ENCODE measurements at regions of chr11 and their contacts with region 1.

Region 1: DNA sequence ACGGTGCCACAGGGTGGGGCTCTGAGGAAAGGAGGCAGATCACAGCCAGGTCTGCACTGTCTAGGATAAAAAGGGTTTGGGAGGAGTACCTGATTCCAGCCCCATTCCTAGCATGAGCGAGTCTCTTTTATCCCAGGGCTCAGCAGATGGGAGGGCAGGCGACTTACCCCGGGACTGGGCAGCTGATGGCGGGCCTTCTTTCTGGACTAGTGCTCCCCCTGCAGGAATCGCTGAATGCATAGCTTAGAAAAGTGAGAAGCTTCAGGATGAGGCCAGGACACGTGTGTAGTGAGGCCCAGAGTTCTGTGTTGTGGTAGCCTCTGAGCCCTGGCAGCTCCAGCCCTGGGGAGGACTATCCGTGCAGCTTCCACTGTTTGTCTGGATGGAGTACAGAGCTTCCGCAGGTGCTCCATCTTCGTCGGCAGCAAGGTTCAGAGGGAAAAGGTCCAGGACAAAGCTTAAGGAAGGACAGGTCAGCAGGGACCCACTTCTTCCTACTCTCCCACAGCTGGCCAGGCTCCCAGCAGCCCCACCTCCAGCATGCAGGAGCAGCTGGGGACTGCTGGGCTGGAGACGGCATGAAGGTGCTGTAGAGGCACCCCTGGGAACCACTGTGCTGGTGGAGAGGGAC is 30.4 kb downstream of the COMMD9 start:
- DNase-seq: peak; percentile 75

Region 2: DNA sequence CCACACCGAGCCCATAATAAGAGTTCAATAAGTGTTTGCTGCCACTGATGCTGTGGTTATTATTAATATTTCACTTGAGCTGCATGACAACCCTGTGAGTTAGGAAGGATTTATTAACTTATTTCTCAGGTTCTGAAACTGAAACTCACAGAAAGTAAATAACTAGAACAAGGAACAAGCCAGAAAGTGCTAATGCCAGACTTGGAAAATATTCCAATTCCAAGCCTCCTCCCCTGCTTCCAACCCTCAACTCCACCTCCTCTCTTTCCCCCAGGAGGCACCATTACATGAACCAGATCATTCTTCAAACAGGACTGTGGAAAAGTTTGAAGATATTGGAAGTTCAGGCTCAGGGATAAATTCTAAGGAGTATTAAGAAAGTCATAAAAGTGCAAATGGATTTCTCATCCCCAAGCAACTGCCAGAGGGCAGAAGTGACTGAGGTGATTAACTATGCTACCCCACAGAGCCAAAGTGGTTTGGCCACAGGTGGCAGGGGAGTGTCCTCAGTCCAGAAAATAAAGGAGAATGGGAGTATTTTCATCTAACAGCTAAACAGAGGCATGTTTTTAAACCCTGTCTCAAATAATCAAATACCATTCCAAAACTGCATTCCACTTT is 643.8 kb before region 1 on chr11:
- in situ Hi-C with region 1: loop called (anchors 5 kb)
- DNase-seq: no peak

Region 3: GRCh38 chr11:36023922-36024321 is 234.9 kb before region 1 on chr11:
- in situ Hi-C with region 1: no loop called
- DNase-seq: no peak

Region 4: GRCh38 chr11:36142439-36142838 is 116.4 kb before region 1 on chr11:
- in situ Hi-C with region 1: no loop called
- DNase-seq: no peak

Region 5: DNA sequence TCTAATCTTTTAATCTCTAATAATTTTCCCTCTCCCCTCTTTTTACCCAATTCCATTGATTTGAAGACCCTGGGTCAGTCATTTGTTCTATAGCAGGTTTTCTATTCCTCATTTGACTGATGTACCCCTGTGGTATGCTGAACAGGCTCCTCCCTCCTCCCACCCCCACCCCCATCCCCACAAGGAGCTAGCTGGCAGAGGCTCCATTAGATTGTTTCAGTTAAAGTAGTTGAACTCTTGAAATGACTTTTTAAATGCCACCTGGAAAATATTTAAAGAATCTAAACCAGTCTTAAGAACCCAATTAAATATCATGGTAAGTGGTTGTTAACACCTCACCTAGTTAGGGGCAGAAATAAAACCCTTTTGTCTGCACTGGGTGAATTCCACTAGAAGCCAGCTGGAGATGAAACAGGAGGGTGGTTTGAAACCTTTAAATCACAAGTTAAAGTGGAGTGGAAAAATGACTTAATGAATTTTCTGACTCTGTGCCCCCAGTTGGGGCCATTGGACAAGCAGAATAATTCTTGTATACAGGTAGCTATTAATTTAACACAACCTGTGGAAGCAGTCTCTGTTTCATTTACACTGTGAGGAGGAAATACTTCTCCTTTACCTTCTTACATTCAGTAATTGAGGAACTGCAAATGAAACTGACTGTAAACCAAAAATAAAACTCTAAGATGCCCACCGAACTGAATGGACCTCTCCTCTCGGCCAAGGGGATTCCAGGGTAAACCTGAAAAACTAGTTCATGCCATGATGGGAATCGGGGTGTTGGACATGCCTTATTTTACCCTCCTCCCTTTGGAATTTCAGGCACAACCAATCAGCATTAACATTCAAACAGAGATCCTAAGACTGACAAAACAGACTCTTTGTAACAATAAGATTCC is 67.9 kb after region 1 on chr11:
- in situ Hi-C with region 1: no loop called
- DNase-seq: no peak

Region 6: GRCh38 chr11:36354221-36355003 is 95.6 kb after region 1 on chr11:
- in situ Hi-C with region 1: no loop called
- DNase-seq: no peak

Measured in G401 (cell line).